ENCODE measurements at regions of chr1 and their contacts with region 1.

Region 1: GRCh38 chr1:33735621-33736020 is 128.3 kb upstream of the HMGB4 start:
- ATAC-seq: peak in 3 of 8 experiments; percentile 29 to 42 (median 32)
- H3K4me3 ChIP-seq: no peak overlapping the region
- H3K27ac ChIP-seq: no peak overlapping the region
- H3K4me1 ChIP-seq: no peaks in the 10 kb centered on the region

Region 2: GRCh38 chr1:33997127-33998036 is 261.8 kb after region 1 on chr1:
- in situ Hi-C with region 1: no loop called
- ATAC-seq: peak in 4 of 8 experiments; percentile 27 to 83 (median 73)
- H3K4me3 ChIP-seq: no peak overlapping the region
- H3K27ac ChIP-seq: no peak overlapping the region
- H3K4me1 ChIP-seq: no peaks in the 10 kb centered on the region

Region 3: DNA sequence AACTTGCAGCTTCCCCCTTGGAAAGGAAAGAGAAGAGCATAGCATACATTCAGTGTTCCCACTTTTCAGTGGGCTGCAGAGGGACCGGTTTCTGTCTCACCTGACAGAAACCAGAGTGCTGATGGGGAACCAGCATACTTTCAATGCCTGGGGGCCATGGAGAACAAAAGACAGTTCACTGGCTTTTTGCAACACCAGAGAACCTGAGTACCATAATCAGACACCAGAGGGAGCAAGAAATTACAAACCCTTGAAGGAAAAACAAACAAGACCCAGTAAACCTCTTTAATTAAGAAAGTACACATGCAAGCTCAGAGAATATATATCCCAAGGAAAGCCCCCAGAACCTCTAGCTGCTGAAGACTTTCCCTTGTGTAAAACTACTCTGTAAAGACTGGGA is 378.3 kb after region 1 on chr1:
- in situ Hi-C with region 1: loop called in 1 of 9 experiments (anchors 25 kb)
- ATAC-seq: peak in 3 of 8 experiments; percentile 33 to 39 (median 35)
- H3K4me3 ChIP-seq: no peak overlapping the region
- H3K27ac ChIP-seq: no peak overlapping the region
- H3K4me1 ChIP-seq: no peaks in the 10 kb centered on the region